B cell (primary cell): ENCODE measurements at regions of chr15 and their contacts with region 1.

Region 1: DNA sequence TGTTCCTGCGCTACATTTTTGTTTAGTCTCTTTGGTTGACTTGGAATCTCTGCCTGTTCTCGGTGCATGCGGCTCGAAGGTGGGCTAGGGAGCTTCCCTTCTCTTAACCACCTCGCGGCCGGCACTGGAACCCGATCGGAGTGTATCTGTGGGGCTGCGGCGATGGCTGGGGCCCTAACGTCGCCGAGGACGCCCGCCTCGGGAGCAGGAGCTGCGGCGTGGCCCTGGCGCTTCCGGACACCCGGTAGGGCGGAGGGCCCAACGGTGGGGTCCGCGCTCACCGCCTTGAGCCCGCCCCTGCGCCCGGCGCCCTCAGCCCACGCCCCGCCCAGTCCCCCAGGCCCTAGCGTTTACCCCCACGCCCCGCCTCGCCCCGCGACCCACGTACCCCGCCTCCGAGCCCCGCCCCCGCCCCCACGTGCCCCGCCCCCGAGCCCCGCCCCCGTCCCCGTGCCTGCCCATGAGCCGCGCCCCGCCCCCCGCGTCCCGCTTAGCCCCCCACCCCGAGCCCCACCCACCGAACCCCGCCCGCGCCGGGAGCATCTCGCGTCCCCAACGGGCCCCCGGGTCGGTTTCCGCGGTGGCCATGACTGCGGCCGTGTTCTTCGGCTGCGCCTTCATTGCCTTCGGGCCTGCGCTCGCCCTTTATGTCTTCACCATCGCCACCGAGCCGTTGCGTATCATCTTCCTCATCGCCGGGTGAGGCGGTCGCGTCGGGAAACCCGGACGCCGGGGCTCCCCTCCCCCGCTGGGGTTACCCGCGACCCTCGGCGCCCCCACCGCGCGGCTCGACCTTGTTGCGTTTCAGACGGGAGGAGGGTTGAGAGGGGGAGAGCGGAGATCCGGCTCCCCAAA is at the start of gene APH1B:
- DNase-seq: peak; percentile 85
- ATAC-seq: peak; percentile 97
- H3K4me3 ChIP-seq: peak within 1 kb of the TSS; percentile 74 to 98 (median 94)
- H3K4me3 Mint-ChIP-seq: peak within 1 kb of the TSS; percentile 92
- H3K27ac ChIP-seq: peak within 1 kb of the TSS; percentile 67 to 79
- H3K27ac Mint-ChIP-seq: peak within 1 kb of the TSS; percentile 94
- H3K4me1 ChIP-seq: peaks cover 12 to 14% of the 10 kb centered on the region in 2 donors
- H3K4me1 Mint-ChIP-seq: peaks cover 19% of the 10 kb centered on the region
- H3K27me3 ChIP-seq: no peaks in the 10 kb centered on the region
- H3K27me3 Mint-ChIP-seq: no peaks in the 10 kb centered on the region
- CTCF ChIP-seq: no peak
- total RNA-seq, gene APH1B: 45.2 and 47.0 TPM in 2 replicates

Region 2: GRCh38 chr15:63122002-63122893 is 155.0 kb before region 1 on chr15:
- CTCF ChIA-PET with region 1: no interaction called
- POLR2A ChIA-PET with region 1: no interaction called
- intact Hi-C with region 1: loop called (anchors 1 kb)
- DNase-seq: peak; percentile 87
- ATAC-seq: peak; percentile 87
- H3K4me3 ChIP-seq: peak overlapping the region; percentile 66 to 95 (median 88)
- H3K4me3 Mint-ChIP-seq: peak overlapping the region; percentile 86
- H3K27ac ChIP-seq: peak overlapping the region; percentile 71 to 85
- H3K27ac Mint-ChIP-seq: peak overlapping the region; percentile 93
- H3K4me1 ChIP-seq: peaks cover 6 to 9% of the 10 kb centered on the region in 2 donors
- H3K4me1 Mint-ChIP-seq: peaks cover 14% of the 10 kb centered on the region
- H3K27me3 ChIP-seq: no peaks in the 10 kb centered on the region
- H3K27me3 Mint-ChIP-seq: no peaks in the 10 kb centered on the region
- CTCF ChIP-seq: peak; percentile 12

Region 3: GRCh38 chr15:63157118-63157843 is 120.0 kb before region 1 on chr15 and contains the start of gene RPS27L:
- CTCF ChIA-PET with region 1: interaction called, 6 read pairs
- POLR2A ChIA-PET with region 1: no interaction called
- intact Hi-C with region 1: loop called (anchors 1 kb)
- DNase-seq: peak; percentile 90
- ATAC-seq: peak; percentile 96
- H3K4me3 ChIP-seq: peak within 1 kb of the TSS; percentile 83 to 95 (median 88)
- H3K4me3 Mint-ChIP-seq: peak within 1 kb of the TSS; percentile 96
- H3K27ac ChIP-seq: peak within 1 kb of the TSS; percentile 68 to 81
- H3K27ac Mint-ChIP-seq: peak within 1 kb of the TSS; percentile 99
- H3K4me1 ChIP-seq: peaks cover 14 to 17% of the 10 kb centered on the region in 2 donors
- H3K4me1 Mint-ChIP-seq: peaks cover 28% of the 10 kb centered on the region
- H3K27me3 ChIP-seq: no peaks in the 10 kb centered on the region
- H3K27me3 Mint-ChIP-seq: no peaks in the 10 kb centered on the region
- CTCF ChIP-seq: no peak
- total RNA-seq, gene RPS27L: 49.4 and 50.9 TPM in 2 replicates

Region 4: GRCh38 chr15:63288778-63289378 is 11.6 kb after region 1 on chr15:
- CTCF ChIA-PET with region 1: interaction called, 15 read pairs
- POLR2A ChIA-PET with region 1: interaction called, 3 read pairs
- intact Hi-C with region 1: no loop called
- DNase-seq: peak; percentile 61
- ATAC-seq: no peak
- H3K4me3 ChIP-seq: no peak overlapping the region
- H3K4me3 Mint-ChIP-seq: no peak overlapping the region
- H3K27ac ChIP-seq: no peak overlapping the region
- H3K27ac Mint-ChIP-seq: no peak overlapping the region
- H3K4me1 ChIP-seq: peaks cover 5 to 8% of the 10 kb centered on the region in 2 donors
- H3K4me1 Mint-ChIP-seq: peaks cover 11% of the 10 kb centered on the region
- H3K27me3 ChIP-seq: no peaks in the 10 kb centered on the region
- H3K27me3 Mint-ChIP-seq: no peaks in the 10 kb centered on the region
- CTCF ChIP-seq: peak; percentile 82

Region 5: GRCh38 chr15:63491116-63491827 is 214.0 kb after region 1 on chr15:
- CTCF ChIA-PET with region 1: no interaction called
- POLR2A ChIA-PET with region 1: no interaction called
- intact Hi-C with region 1: no loop called
- DNase-seq: peak; percentile 84
- ATAC-seq: peak; percentile 77
- H3K4me3 ChIP-seq: peak overlapping the region in 2 of 5 experiments; percentile 4 to 38
- H3K4me3 Mint-ChIP-seq: peak overlapping the region; percentile 74
- H3K27ac ChIP-seq: peak overlapping the region; percentile 59 to 61
- H3K27ac Mint-ChIP-seq: peak overlapping the region; percentile 85
- H3K4me1 ChIP-seq: peaks cover 41 to 62% of the 10 kb centered on the region in 2 donors
- H3K4me1 Mint-ChIP-seq: peaks cover 68% of the 10 kb centered on the region
- H3K27me3 ChIP-seq: no peaks in the 10 kb centered on the region
- H3K27me3 Mint-ChIP-seq: no peaks in the 10 kb centered on the region
- CTCF ChIP-seq: no peak